Breast epithelium (tissue), 4 donors: ENCODE measurements at regions of chr17 and their contacts with region 1.

Region 1: GRCh38 chr17:5587438-5588032 is 3.2 kb upstream of the NLRP1 start:
- DNase-seq: no peak
- H3K4me3 ChIP-seq: no peak overlapping the region
- H3K27ac ChIP-seq: no peak overlapping the region
- H3K4me1 ChIP-seq: peaks cover 0 to 6% of the 10 kb centered on the region in 2 donors
- H3K27me3 ChIP-seq: peaks cover 0 to 8% of the 10 kb centered on the region in 2 donors
- CTCF ChIP-seq: peak; percentile 74 to 90 (median 86)
- POLR2A ChIP-seq: no peak

Region 2: GRCh38 chr17:6421700-6422604 is 834.4 kb after region 1 on chr17:
- intact Hi-C with region 1: loop called (anchors 2 kb)
- DNase-seq: peak; percentile 41 to 81
- H3K4me3 ChIP-seq: no peak overlapping the region
- H3K27ac ChIP-seq: no peak overlapping the region
- H3K4me1 ChIP-seq: no peaks in the 10 kb centered on the region
- H3K27me3 ChIP-seq: peaks cover 0 to 31% of the 10 kb centered on the region in 2 donors
- CTCF ChIP-seq: peak; percentile 54 to 84 (median 81)
- POLR2A ChIP-seq: no peak